ENCODE measurements at regions of chr10 and their contacts with region 1.

Region 1: DNA sequence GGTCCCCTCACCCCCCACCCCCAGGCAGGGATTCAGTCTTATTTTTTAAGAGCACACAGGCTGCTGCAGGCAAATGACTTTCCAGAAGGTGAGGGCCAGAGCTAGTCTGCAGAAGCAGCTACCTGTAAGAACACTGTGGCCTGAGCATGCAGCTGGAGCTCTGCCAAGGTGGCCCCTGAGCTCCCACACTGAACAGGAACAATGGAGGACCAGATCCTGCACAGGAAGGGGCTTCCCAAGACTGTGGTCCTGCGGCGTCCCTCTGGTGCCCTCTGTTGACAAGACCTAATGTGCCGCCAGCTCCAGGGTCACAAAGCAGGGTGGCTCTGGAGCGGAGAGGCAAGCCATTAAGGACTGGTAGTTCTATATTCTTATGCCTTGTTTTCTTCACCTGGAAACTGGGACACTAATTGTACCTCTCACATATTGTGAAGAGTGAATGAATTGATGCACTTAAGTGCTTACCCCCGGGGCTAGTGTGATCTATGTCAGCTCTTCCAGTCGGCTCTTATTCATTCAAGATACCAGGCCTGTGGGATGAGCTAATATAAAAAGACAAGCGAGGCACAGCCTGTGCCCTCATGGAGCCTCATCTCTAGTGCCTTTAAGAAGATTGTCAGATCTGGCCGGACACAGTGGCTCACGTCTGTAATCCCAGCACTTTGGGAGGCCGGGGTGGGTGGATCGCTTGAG is 8.0 kb upstream of the BEND7 start:
- DNase-seq: peak in 2 of 3 donors; percentile 13 to 43
- H3K4me3 ChIP-seq: no peak overlapping the region
- H3K4me3 Mint-ChIP-seq: no peak overlapping the region
- H3K27ac ChIP-seq: no peak overlapping the region
- H3K27ac Mint-ChIP-seq: no peak overlapping the region
- H3K4me1 ChIP-seq: no peaks in the 10 kb centered on the region
- H3K4me1 Mint-ChIP-seq: peaks cover 6% of the 10 kb centered on the region
- H3K27me3 ChIP-seq: peaks cover 7 to 11% of the 10 kb centered on the region in 2 donors
- H3K27me3 Mint-ChIP-seq: peaks cover 16 to 22% (median 18%) of the 10 kb centered on the region in 3 donors
- CTCF ChIP-seq: peak; percentile 42

Region 2: DNA sequence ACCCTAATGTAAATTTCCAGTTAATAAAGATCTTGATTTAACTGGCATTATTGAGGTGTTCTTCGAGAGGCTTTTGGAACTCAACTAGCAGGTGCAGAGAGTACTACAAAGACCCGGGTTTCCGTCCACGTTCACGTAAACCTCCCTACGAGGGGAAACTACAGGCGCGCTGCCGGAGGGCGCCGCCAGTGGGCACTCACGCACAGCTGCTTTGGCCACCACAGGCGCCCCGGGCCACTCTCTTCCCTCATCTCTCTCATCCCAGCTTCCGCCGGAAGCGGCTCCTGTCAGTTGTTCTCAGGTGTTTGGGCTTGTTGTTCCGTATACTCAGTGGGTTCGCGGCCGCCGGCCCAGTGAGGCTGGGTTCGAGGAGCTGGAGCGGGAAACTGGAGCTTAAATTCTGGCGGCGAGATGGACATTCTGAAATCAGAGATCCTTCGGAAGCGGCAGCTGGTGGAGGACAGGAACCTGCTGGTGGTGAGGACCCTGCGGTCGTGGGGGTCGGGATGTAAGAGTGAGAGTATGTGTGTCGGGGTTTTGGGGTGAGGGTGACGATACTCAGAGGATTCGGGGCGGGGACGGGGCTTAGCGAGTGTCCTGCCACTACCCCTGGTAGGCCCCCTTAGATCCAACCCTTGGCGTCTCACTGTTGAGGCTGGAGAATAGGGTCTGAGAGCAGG is 50.0 kb after region 1 on chr10 and contains the start of gene PRPF18:
- intact Hi-C with region 1: loop called in 1 of 2 experiments (anchors 10 kb)
- DNase-seq: peak; percentile 83 to 90 (median 90)
- H3K4me3 ChIP-seq: peak within 1 kb of the TSS; percentile 86 to 96 (median 89)
- H3K4me3 Mint-ChIP-seq: peak within 1 kb of the TSS; percentile 100
- H3K27ac ChIP-seq: peak within 1 kb of the TSS; percentile 19 to 83
- H3K27ac Mint-ChIP-seq: peak within 1 kb of the TSS; percentile 84 to 98 (median 96)
- H3K4me1 ChIP-seq: peaks cover 13 to 15% of the 10 kb centered on the region in 2 donors
- H3K4me1 Mint-ChIP-seq: peaks cover 28% of the 10 kb centered on the region
- H3K27me3 ChIP-seq: peaks cover 5 to 12% of the 10 kb centered on the region in 2 donors
- H3K27me3 Mint-ChIP-seq: peaks cover 14 to 25% (median 17%) of the 10 kb centered on the region in 3 donors
- CTCF ChIP-seq: peak; percentile 98
- polyA plus RNA-seq, gene PRPF18: 13.8 to 31.4 (median 26.8) TPM

Measured in CD14-positive monocyte (primary cell).